HepG2 (cell line): ENCODE measurements at regions of chr1 and their contacts with region 1.

Region 1: DNA sequence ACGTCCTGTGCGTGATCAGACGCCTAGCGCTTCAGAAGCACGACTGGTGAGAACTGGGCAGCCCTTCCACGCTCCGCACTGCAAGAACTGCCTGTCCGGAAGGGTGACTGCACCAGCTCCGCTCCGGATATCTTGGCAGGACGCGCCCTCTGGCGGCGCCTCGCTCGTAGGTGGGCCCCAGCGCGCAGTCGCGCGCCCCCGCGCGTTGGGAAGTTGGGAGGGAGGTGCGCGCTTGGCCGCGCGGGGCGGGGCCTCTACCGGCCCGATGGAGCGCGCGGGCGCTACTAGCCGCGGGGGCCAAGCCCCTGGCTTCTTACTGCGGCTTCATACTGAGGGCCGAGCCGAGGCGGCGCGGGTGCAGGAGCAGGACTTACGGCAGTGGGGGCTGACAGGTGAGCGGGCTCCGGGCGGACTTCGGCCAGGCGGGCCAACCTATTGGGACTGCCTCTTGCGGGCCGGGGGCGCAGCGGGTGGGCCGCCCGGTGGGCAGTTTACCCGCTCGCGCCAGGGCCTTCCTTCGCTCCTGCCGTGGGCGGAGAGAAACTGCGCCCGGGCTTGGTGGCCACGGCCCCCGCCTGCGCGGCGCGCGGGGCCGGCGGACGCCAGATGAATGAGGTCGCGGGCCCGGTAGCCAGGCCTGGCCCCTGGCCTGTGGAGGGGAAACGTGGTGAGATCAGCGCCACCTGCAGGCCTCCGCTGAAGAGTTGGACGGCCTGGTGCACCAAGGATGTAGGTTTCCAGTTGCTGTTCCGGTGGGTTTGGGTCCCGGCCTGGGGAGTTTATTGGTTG is at the start of gene CHD1L:
- DNase-seq: peak; percentile 88
- ATAC-seq: peak; percentile 88
- H3K4me3 ChIP-seq: peak within 1 kb of the TSS; percentile 77 to 97 (median 89)
- H3K27ac ChIP-seq: peak within 1 kb of the TSS; percentile 93
- H3K4me1 ChIP-seq: peaks cover 80% of the 10 kb centered on the region
- H3K27me3 ChIP-seq: no peaks in the 10 kb centered on the region; a peak in 1 of 5 replicates
- CTCF ChIP-seq: peak; percentile 96
- EP300 ChIP-seq: 0 out of 4 replicates have a peak, but pooled peaks of 1 of the 2 experiments have one; percentile 33
- POLR2A ChIP-seq: peak; percentile 65 to 76; a peak in 3 of 4 replicates
- RAD21 ChIP-seq: peak; percentile 100
- total RNA-seq, gene CHD1L: 111 and 123 TPM in 2 replicates

Region 2: DNA sequence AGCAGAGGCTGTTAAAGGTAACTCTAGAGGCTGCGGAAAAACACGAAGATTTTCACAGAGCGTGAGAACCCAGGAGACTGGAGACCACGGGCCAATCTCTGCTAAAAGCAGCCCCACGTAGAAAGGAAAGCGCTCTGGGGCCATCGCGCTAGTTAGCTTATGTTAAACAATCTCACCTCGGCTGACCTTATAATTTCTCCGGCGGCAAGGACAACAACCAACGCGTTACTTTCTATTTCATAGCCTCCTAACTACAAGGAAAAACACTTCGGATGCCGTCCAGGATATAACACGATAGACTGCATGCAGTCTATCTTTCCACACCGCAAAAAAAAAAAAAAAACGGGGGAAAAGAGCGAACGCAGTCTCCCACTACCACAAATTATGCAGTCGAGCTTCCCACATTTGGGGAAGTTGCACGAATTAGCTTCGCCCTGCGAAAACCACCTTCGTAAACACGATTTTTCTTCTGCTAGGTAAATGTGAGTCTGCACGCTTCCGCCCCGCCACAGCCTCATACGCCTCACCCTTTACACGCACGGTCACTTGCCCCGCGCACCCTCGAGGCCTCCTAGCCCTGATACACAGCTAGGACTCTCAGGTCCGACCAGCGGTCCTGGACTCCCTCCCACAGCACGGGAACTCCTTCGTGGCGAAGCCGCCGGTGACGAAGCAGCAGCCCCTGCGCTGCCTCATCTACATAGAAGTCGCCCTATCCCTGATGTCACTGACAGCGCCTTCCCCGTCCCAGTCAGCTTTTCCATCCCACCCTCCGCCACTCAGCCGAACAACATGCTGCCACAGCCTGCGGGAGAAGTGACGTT is 158.1 kb before region 1 on chr1:
- CTCF ChIA-PET with region 1: no interaction called
- POLR2A ChIA-PET with region 1: interaction called, 10 read pairs
- in situ Hi-C with region 1: no loop called
- intact Hi-C with region 1: no loop called
- DNase-seq: peak; percentile 74
- ATAC-seq: peak; percentile 88
- H3K4me3 ChIP-seq: peak overlapping the region; percentile 18 to 69 (median 26); a peak in 5 of 6 replicates
- H3K27ac ChIP-seq: peak overlapping the region; percentile 62
- H3K4me1 ChIP-seq: peaks cover 12% of the 10 kb centered on the region; the same call in 1 of the 2 replicates
- H3K27me3 ChIP-seq: peaks cover 0 to 17% of the 10 kb centered on the region in 2 experiments; a peak in 3 of 5 replicates
- CTCF ChIP-seq: no peak
- EP300 ChIP-seq: no peak
- POLR2A ChIP-seq: peak; percentile 90 to 100
- RAD21 ChIP-seq: no peak

Region 3: DNA sequence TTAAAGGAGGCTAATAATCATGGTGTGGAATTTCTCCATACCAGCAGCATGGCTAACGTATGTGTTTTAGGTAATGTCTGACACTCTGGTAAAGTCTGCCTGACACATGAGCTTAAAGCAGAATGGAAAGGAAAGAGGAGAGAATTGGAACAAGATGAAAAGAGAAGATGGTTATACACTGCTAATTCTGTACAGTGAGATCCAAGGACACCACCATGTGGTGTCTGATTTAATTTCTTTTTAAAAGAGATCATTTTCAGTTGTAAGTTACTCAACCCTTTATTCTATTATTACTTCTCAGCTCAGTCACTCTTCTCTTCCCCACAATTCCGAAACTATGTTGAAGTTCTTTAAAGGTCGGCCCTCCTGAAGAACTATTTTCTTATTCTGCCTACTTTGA is 86.0 kb before region 1 on chr1:
- CTCF ChIA-PET with region 1: no interaction called
- POLR2A ChIA-PET with region 1: no interaction called
- in situ Hi-C with region 1: no loop called
- intact Hi-C with region 1: no loop called
- DNase-seq: no peak
- ATAC-seq: no peak
- H3K4me3 ChIP-seq: no peak overlapping the region
- H3K27ac ChIP-seq: no peak overlapping the region
- H3K4me1 ChIP-seq: peaks cover 16% of the 10 kb centered on the region
- H3K27me3 ChIP-seq: no peaks in the 10 kb centered on the region
- CTCF ChIP-seq: no peak
- EP300 ChIP-seq: no peak
- POLR2A ChIP-seq: no peak
- RAD21 ChIP-seq: no peak

Region 4: GRCh38 chr1:147172168-147172992 is 70.3 kb before region 1 on chr1 and contains the start of gene PRKAB2:
- CTCF ChIA-PET with region 1: interaction called, 141 read pairs
- POLR2A ChIA-PET with region 1: interaction called, 82 read pairs
- in situ Hi-C with region 1: loop called (anchors 5 kb)
- intact Hi-C with region 1: loop called (anchors 1 kb)
- DNase-seq: peak; percentile 91
- ATAC-seq: peak; percentile 93
- H3K4me3 ChIP-seq: peak within 1 kb of the TSS; percentile 85 to 99 (median 99)
- H3K27ac ChIP-seq: peak within 1 kb of the TSS; percentile 89
- H3K4me1 ChIP-seq: peaks cover 40% of the 10 kb centered on the region
- H3K27me3 ChIP-seq: peaks cover 0 to 4% of the 10 kb centered on the region in 2 experiments; a peak in 1 of 5 replicates
- CTCF ChIP-seq: peak; percentile 92
- EP300 ChIP-seq: peak in 1 of 2 experiments; percentile 35; a peak in 1 of 4 replicates
- POLR2A ChIP-seq: peak in 1 of 2 experiments; percentile 59; a peak in 3 of 4 replicates
- RAD21 ChIP-seq: peak; percentile 99
- total RNA-seq, gene PRKAB2: 43.3 and 44.0 TPM in 2 replicates

Region 5: GRCh38 chr1:147201276-147201675 is 41.4 kb before region 1 on chr1:
- CTCF ChIA-PET with region 1: no interaction called
- POLR2A ChIA-PET with region 1: interaction called, 12 read pairs
- in situ Hi-C with region 1: no loop called
- intact Hi-C with region 1: loop called (anchors 5 kb)
- DNase-seq: no peak
- ATAC-seq: peak; percentile 13; the same call in 1 of the 3 replicates
- H3K4me3 ChIP-seq: no peak overlapping the region
- H3K27ac ChIP-seq: no peak overlapping the region
- H3K4me1 ChIP-seq: no peaks in the 10 kb centered on the region
- H3K27me3 ChIP-seq: no peaks in the 10 kb centered on the region
- CTCF ChIP-seq: no peak
- EP300 ChIP-seq: no peak
- POLR2A ChIP-seq: peak in 1 of 2 experiments; percentile 20; a peak in 1 of 4 replicates
- RAD21 ChIP-seq: no peak

Region 6: DNA sequence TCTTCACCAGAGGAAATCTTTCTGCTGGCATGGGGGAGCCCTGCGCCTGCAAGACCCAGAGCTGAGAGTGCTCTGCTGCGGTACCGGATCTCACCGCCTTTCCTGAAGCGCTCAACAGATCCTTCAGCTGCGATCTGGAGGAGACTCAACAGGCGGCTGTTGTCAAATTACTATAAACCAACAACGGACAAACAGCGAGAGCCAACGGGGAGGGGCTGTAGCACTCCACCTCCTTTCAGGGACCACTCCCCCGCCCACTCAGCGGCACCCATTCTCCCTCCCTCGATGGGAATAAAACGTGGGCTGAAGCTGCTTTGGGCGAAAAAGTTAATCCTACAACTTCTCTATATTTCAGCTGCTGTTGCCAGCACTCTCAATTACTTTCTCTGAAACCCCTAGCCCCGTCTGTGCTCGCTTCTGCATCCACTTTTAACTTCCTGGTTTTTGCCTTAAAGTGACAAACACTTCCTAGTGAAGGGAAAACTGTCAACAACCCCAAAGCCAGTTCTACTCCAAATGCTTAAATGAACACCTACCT is 17.4 kb before region 1 on chr1 and contains the start of gene FMO5:
- CTCF ChIA-PET with region 1: interaction called, 16 read pairs
- POLR2A ChIA-PET with region 1: interaction called, 100 read pairs
- in situ Hi-C with region 1: no loop called
- intact Hi-C with region 1: loop called (anchors 2 kb)
- DNase-seq: no peak
- ATAC-seq: peak; percentile 93
- H3K4me3 ChIP-seq: peak within 1 kb of the TSS; percentile 62 to 80 (median 69)
- H3K27ac ChIP-seq: peak within 1 kb of the TSS; percentile 74
- H3K4me1 ChIP-seq: peaks cover 59% of the 10 kb centered on the region
- H3K27me3 ChIP-seq: no peaks in the 10 kb centered on the region; a peak in 1 of 5 replicates
- CTCF ChIP-seq: peak; percentile 9; the same call in 1 of the 2 replicates
- EP300 ChIP-seq: no peak
- POLR2A ChIP-seq: peak in 1 of 2 experiments; percentile 90; a peak in 2 of 4 replicates
- RAD21 ChIP-seq: no peak
- total RNA-seq, gene FMO5: 48.2 and 59.5 TPM in 2 replicates

Region 7: DNA sequence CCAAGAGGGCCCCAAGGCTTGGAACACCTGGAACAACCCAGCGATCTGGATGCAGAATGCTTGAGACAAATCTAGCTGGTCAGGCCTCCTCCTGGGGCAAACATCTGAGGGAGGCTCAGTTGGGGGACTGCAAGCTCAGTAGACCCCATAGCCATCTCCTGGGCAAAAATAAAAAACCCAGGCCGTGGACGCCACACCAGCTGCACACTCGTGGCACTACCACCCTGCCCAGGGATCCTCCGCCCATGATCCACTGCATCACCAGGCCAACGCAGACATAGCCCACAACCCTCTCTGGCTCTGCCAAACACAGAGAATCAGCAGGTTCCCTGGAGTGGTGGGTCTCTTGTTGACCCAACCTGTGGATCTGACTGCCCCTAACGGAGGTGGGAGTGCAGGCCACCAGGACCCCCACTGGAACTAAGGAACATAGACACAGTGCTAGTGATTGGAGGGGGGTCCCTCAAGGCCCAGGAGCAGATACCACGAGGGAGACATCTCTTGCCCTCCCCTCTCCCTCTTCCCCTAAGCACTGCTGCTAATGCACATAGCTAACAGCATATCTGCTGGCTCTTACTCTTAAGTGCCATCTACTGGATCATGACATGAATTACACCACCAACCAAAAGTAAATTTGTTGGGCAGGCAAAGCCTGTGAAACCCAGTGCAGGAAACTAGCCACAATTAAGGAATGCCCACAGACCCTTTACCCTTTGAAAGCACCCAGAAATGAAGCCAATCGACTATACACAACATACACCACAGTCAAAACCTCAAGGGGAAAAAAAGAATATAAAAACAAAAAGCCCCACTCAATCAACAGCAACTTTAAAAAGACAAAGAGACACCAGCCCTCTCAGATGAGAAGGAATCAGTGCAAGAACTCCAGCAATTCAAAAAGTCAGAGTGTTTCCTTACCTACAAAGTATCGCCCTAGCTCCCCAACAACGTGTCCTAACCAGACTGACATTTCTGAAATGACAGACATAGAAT is 147.2 kb after region 1 on chr1:
- CTCF ChIA-PET with region 1: no interaction called
- POLR2A ChIA-PET with region 1: no interaction called
- in situ Hi-C with region 1: no loop called
- intact Hi-C with region 1: no loop called
- DNase-seq: peak; percentile 46
- ATAC-seq: peak; percentile 95
- H3K4me3 ChIP-seq: no peak overlapping the region
- H3K27ac ChIP-seq: no peak overlapping the region
- H3K4me1 ChIP-seq: no peaks in the 10 kb centered on the region
- H3K27me3 ChIP-seq: no peaks in the 10 kb centered on the region; a peak in 1 of 5 replicates
- CTCF ChIP-seq: peak; percentile 84
- EP300 ChIP-seq: no peak
- POLR2A ChIP-seq: no peak
- RAD21 ChIP-seq: no peak